ENCODE measurements at regions of chr10 and their contacts with region 1.

Region 1: DNA sequence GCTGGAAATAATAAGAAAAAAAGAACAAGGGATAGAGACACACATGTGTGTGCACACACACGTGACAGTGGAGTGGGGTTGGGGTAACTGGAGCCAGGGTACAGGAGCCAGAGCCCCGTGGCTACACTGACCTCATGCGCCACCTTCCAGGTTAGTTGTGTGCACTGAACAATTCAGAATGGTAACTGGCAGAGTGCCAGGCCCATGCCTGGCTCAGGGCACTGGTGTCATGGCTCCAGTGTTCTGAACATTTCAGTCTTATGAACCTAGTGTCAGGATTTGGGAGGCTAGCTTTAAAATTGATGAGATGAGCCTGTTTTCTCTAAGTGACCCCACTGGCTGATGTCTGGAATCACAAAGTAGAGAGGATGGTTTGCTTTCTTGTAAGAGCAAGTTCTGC is 269.6 kb downstream of the SORCS3 start:
- DNase-seq: no peak
- H3K4me3 ChIP-seq: no peak overlapping the region
- H3K27ac ChIP-seq: no peak overlapping the region
- H3K4me1 ChIP-seq: peaks cover 0 to 7% (median 0%) of the 10 kb centered on the region in 4 experiments
- H3K27me3 ChIP-seq: no peaks in the 10 kb centered on the region

Region 2: GRCh38 chr10:104925232-104925851 is 14.6 kb after region 1 on chr10:
- CTCF ChIA-PET with region 1: interaction called, 10 read pairs
- POLR2A ChIA-PET with region 1: no interaction called
- DNase-seq: peak; percentile 40 to 73 (median 58)
- H3K4me3 ChIP-seq: no peak overlapping the region
- H3K27ac ChIP-seq: no peak overlapping the region
- H3K4me1 ChIP-seq: no peaks in the 10 kb centered on the region
- H3K27me3 ChIP-seq: peaks cover 0 to 3% (median 2%) of the 10 kb centered on the region in 5 experiments